ENCODE measurements at regions of chr1 and their contacts with region 1.

Region 1: GRCh38 chr1:99969729-99970621 is at the start of gene SLC35A3:
- DNase-seq: peak; percentile 93
- total RNA-seq, gene SLC35A3: 9.8 TPM

Region 2: GRCh38 chr1:99266726-99267125 is 703.2 kb before region 1 on chr1:
- intact Hi-C with region 1: no loop called
- DNase-seq: no peak

Region 3: GRCh38 chr1:99943223-99943794 is 26.7 kb before region 1 on chr1:
- intact Hi-C with region 1: no loop called
- DNase-seq: no peak

Region 4: GRCh38 chr1:100037927-100038659 is 68.1 kb after region 1 on chr1:
- intact Hi-C with region 1: loop called (anchors 5 kb)
- DNase-seq: peak; percentile 96